Astrocyte of the cerebellum (primary cell): ENCODE measurements at regions of chr15 and their contacts with region 1.

Region 1: GRCh38 chr15:71114896-71115554 is at the start of gene THSD4:
- DNase-seq: no peak
- H3K4me3 ChIP-seq: peak within 1 kb of the TSS; percentile 66
- CTCF ChIP-seq: peak; percentile 95

Region 2: GRCh38 chr15:71219645-71220044 is 104.6 kb after region 1 on chr15:
- in situ Hi-C with region 1: no loop called
- DNase-seq: no peak
- H3K4me3 ChIP-seq: no peak overlapping the region
- CTCF ChIP-seq: no peak

Region 3: GRCh38 chr15:71448688-71449114 is 333.7 kb after region 1 on chr15:
- in situ Hi-C with region 1: loop called (anchors 25 kb)
- DNase-seq: peak; percentile 73
- H3K4me3 ChIP-seq: no peak overlapping the region
- CTCF ChIP-seq: peak; percentile 90